ENCODE measurements at regions of chr20 and their contacts with region 1.

Region 1: GRCh38 chr20:492159-492558 is 29.8 kb upstream of the TBC1D20 start:
- DNase-seq: no peak
- ATAC-seq: no peak
- H3K4me3 Mint-ChIP-seq: no peak overlapping the region
- H3K27ac Mint-ChIP-seq: no peak overlapping the region
- H3K4me1 Mint-ChIP-seq: no peaks in the 10 kb centered on the region
- H3K27me3 Mint-ChIP-seq: no peaks in the 10 kb centered on the region
- CTCF ChIP-seq: no peak

Region 2: GRCh38 chr20:478949-479429 is 13.2 kb before region 1 on chr20:
- CTCF ChIA-PET with region 1: interaction called, 10 read pairs
- POLR2A ChIA-PET with region 1: interaction called, 4 read pairs
- intact Hi-C with region 1: no loop called
- DNase-seq: peak; percentile 38
- ATAC-seq: peak; percentile 72
- H3K4me3 Mint-ChIP-seq: no peak overlapping the region
- H3K27ac Mint-ChIP-seq: no peak overlapping the region
- H3K4me1 Mint-ChIP-seq: peaks cover 18% of the 10 kb centered on the region
- H3K27me3 Mint-ChIP-seq: no peaks in the 10 kb centered on the region
- CTCF ChIP-seq: peak; percentile 84